CD4-positive, alpha-beta memory T cell (primary cell): ENCODE measurements at regions of chr12 and their contacts with region 1.

Region 1: GRCh38 chr12:71663561-71664294 is at the start of gene ZFC3H1:
- DNase-seq: peak; percentile 95 to 98 (median 97)
- H3K4me3 ChIP-seq: peak within 1 kb of the TSS; percentile 92 to 95
- H3K4me3 Mint-ChIP-seq: peak within 1 kb of the TSS; percentile 97 to 100 (median 99)
- H3K27ac ChIP-seq: peak within 1 kb of the TSS; percentile 96
- H3K27ac Mint-ChIP-seq: peak within 1 kb of the TSS; percentile 98 to 100 (median 100)
- H3K4me1 ChIP-seq: peaks cover 41% of the 10 kb centered on the region
- H3K4me1 Mint-ChIP-seq: peaks cover 30 to 69% (median 44%) of the 10 kb centered on the region in 4 donors
- H3K27me3 ChIP-seq: no peaks in the 10 kb centered on the region
- H3K27me3 Mint-ChIP-seq: no peaks in the 10 kb centered on the region
- total RNA-seq, gene ZFC3H1: 118 to 121 TPM

Region 2: GRCh38 chr12:71426300-71427047 is 237.3 kb before region 1 on chr12:
- CTCF ChIA-PET with region 1: no interaction called
- POLR2A ChIA-PET with region 1: no interaction called
- intact Hi-C with region 1: no loop called
- DNase-seq: no peak
- H3K4me3 ChIP-seq: no peak overlapping the region
- H3K4me3 Mint-ChIP-seq: no peak overlapping the region
- H3K27ac ChIP-seq: no peak overlapping the region
- H3K27ac Mint-ChIP-seq: no peak overlapping the region
- H3K4me1 ChIP-seq: no peaks in the 10 kb centered on the region
- H3K4me1 Mint-ChIP-seq: no peaks in the 10 kb centered on the region
- H3K27me3 ChIP-seq: no peaks in the 10 kb centered on the region
- H3K27me3 Mint-ChIP-seq: peaks cover 5 to 20% of the 10 kb centered on the region in 2 donors

Region 3: GRCh38 chr12:71626098-71626497 is 37.6 kb before region 1 on chr12:
- CTCF ChIA-PET with region 1: no interaction called
- POLR2A ChIA-PET with region 1: interaction called, 10 read pairs
- intact Hi-C with region 1: no loop called
- DNase-seq: no peak
- H3K4me3 ChIP-seq: no peak overlapping the region
- H3K4me3 Mint-ChIP-seq: no peak overlapping the region
- H3K27ac ChIP-seq: no peak overlapping the region
- H3K27ac Mint-ChIP-seq: peak overlapping the region in 6 of 7 donors; percentile 6 to 77 (median 23)
- H3K4me1 ChIP-seq: peaks cover 12% of the 10 kb centered on the region
- H3K4me1 Mint-ChIP-seq: peaks cover 10 to 15% (median 11%) of the 10 kb centered on the region in 4 donors
- H3K27me3 ChIP-seq: no peaks in the 10 kb centered on the region
- H3K27me3 Mint-ChIP-seq: no peaks in the 10 kb centered on the region

Region 4: GRCh38 chr12:71645268-71645667 is 18.5 kb before region 1 on chr12:
- CTCF ChIA-PET with region 1: interaction called, 6 read pairs
- POLR2A ChIA-PET with region 1: interaction called, 12 read pairs
- intact Hi-C with region 1: no loop called
- DNase-seq: no peak
- H3K4me3 ChIP-seq: no peak overlapping the region
- H3K4me3 Mint-ChIP-seq: no peak overlapping the region
- H3K27ac ChIP-seq: no peak overlapping the region
- H3K27ac Mint-ChIP-seq: peak overlapping the region in 3 of 7 donors; percentile 52 to 78 (median 68)
- H3K4me1 ChIP-seq: peaks cover 12% of the 10 kb centered on the region
- H3K4me1 Mint-ChIP-seq: peaks cover 16 to 47% (median 27%) of the 10 kb centered on the region in 4 donors
- H3K27me3 ChIP-seq: no peaks in the 10 kb centered on the region
- H3K27me3 Mint-ChIP-seq: no peaks in the 10 kb centered on the region

Region 5: DNA sequence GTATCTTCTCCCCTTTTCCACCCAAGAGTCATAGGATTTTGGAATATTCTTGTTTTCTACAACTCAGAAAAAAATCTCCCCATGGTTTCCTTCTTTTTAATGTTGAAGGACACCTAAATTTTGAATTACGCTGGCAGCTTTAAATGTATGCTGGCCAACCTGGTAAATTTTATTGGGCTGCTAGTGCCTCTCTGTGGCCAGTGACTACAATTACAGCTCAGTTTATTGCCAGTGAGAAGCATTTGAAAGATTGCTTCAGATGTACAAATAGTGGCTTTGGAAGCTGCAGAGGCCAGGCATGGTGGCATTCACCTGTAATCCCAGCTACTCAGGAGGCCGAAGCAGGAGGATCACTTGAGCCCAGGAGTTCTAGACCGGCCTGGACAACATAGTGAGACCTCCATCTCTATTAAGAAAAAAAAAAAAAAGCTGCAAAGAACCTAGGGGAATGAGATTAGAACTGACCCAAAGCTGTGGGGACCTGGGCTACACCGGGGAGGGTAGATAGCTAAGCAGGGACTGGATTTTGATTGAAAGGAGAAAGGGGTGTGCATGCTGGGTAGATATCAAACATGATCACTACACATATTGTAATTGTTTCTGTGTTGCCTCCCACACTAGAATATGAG is 83.4 kb after region 1 on chr12:
- CTCF ChIA-PET with region 1: interaction called, 27 read pairs
- POLR2A ChIA-PET with region 1: interaction called, 26 read pairs
- intact Hi-C with region 1: loop called (anchors 2 kb)
- DNase-seq: peak; percentile 61 to 65 (median 62)
- H3K4me3 ChIP-seq: no peak overlapping the region
- H3K4me3 Mint-ChIP-seq: no peak overlapping the region
- H3K27ac ChIP-seq: no peak overlapping the region
- H3K27ac Mint-ChIP-seq: peak overlapping the region in 1 of 7 donors; percentile 9
- H3K4me1 ChIP-seq: no peaks in the 10 kb centered on the region
- H3K4me1 Mint-ChIP-seq: no peaks in the 10 kb centered on the region
- H3K27me3 ChIP-seq: peaks cover 4% of the 10 kb centered on the region
- H3K27me3 Mint-ChIP-seq: peaks cover 7 to 17% of the 10 kb centered on the region in 2 donors

Region 6: DNA sequence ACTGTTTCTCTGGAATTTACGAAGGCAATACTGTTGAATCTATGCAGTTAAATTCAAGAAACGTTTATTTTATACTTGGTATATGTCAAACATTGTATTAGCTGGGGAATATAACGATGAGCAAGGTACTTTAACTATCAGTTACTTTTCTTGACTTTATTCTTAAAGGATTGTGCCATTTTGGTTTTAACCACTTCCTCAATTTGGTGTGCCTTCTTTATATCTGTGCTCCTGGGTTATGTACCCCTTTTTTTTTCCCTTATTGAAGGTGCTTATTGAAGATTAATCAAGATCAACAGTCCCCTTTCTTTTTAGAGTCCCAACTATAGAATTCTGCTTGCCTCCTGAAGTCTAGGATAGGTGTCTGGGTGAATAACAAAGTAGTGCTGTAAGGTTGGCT is 96.7 kb after region 1 on chr12:
- CTCF ChIA-PET with region 1: interaction called, 7 read pairs
- POLR2A ChIA-PET with region 1: interaction called, 43 read pairs
- intact Hi-C with region 1: no loop called
- DNase-seq: no peak
- H3K4me3 ChIP-seq: no peak overlapping the region
- H3K4me3 Mint-ChIP-seq: peak overlapping the region in 3 of 8 donors; percentile 1 to 50 (median 30)
- H3K27ac ChIP-seq: no peak overlapping the region
- H3K27ac Mint-ChIP-seq: peak overlapping the region in 1 of 7 donors; percentile 52
- H3K4me1 ChIP-seq: peaks cover 41% of the 10 kb centered on the region
- H3K4me1 Mint-ChIP-seq: peaks cover 39 to 76% (median 58%) of the 10 kb centered on the region in 4 donors
- H3K27me3 ChIP-seq: no peaks in the 10 kb centered on the region
- H3K27me3 Mint-ChIP-seq: no peaks in the 10 kb centered on the region